Pancreas (tissue), 10 donors: ENCODE measurements at regions of chr16 and their contacts with region 1.

Region 1: GRCh38 chr16:10509534-10510025 is 70.8 kb downstream of the EMP2 start:
- DNase-seq: peak in 4 of 6 donors; percentile 46 to 78 (median 66)
- ATAC-seq: peak; percentile 91 to 97 (median 96)
- H3K4me3 ChIP-seq: no peak overlapping the region
- H3K27ac ChIP-seq: no peak overlapping the region
- H3K4me1 ChIP-seq: peaks cover 0 to 8% (median 6%) of the 10 kb centered on the region in 3 donors
- H3K27me3 ChIP-seq: no peaks in the 10 kb centered on the region
- CTCF ChIP-seq: peak; percentile 55 to 71 (median 64)

Region 2: DNA sequence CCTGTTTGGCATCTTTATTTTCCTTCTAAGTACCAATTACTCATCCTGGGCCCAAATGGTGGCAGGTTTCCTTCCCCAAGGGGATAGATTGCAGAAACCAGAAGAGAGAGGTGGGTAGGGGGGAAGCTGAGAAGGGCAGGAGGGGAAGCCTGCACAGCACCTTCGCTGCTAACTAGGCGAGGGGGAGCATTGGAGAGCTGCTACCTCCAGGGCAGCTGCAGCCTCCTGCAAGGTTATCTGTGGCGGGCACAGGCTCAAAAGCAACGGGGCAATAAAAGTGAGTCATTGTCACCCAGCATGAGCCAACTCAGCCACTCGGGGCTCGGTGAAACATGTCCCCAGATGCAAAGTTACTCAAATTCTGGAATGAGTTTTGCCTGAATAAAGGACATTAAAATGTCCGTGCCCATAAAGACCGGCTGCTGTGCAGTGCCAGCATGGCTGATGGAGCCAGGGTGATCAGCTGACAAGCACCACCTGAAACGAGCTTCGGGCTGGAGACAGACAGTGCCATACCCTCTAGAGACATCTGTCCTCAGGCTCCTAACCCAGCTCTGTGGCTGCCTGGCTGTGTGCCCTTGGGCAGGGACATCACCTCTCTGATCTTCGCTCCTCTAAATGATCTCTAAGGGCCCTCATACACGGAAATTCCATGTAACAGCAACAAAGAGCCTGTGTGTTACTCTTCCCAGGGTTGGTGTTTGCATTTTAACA is 259.3 kb before region 1 on chr16:
- intact Hi-C with region 1: loop called in 2 of 3 experiments (anchors 5 kb)
- DNase-seq: no peak
- ATAC-seq: peak in 2 of 4 donors; percentile 27 to 53
- H3K4me3 ChIP-seq: no peak overlapping the region
- H3K27ac ChIP-seq: no peak overlapping the region
- H3K4me1 ChIP-seq: no peaks in the 10 kb centered on the region
- H3K27me3 ChIP-seq: no peaks in the 10 kb centered on the region
- CTCF ChIP-seq: no peak

Region 3: DNA sequence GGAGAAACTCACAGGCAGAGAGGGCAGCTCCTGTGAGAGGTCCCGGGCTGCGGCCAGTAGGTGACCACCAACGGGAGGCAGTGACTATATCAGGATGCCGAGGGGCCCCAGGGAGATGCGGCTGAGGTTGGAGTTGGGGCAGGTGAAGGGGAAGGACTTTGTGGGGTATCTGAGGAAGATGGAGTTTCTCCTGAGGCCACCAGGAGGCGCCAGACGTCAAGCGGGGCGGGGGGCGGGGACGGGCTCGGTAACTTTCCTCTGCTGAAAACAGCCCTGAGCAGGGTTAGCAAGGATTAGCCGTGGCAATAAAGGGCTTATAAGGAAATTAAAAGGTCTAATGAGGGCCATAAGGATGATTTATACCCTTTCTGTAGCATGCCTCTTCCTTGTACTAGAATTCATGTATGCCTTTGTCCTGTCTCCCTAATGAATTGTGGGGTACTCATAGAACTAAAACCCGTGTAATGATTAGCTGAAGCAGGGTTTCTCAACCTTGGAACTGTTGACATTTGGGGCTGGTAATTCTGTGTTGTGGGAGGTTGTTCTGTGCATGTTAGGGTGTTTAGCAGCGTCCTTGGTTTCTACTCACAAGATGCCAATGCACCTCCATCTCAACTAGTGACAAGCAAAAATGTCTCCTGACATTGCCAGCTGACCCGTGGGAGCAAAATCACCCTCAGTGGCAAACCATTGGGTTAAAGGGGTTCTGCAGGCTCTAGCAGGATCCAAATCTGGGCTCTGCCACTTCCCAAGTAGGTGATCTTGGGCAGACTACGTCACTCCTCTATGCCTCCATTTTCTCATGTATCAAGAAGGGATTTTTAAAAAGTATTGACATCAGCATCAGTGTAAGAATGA is 252.6 kb before region 1 on chr16:
- intact Hi-C with region 1: loop called in 2 of 3 experiments (anchors 5 kb)
- DNase-seq: peak; percentile 3 to 71 (median 37)
- ATAC-seq: peak; percentile 86 to 97 (median 95)
- H3K4me3 ChIP-seq: no peak overlapping the region
- H3K27ac ChIP-seq: no peak overlapping the region
- H3K4me1 ChIP-seq: peaks cover 0 to 7% (median 0%) of the 10 kb centered on the region in 3 donors
- H3K27me3 ChIP-seq: no peaks in the 10 kb centered on the region
- CTCF ChIP-seq: peak; percentile 62 to 70 (median 66)

Region 4: GRCh38 chr16:10314811-10315210 is 194.8 kb before region 1 on chr16:
- intact Hi-C with region 1: loop called in 2 of 3 experiments (anchors 5 to 10 kb)
- DNase-seq: no peak
- ATAC-seq: peak in 2 of 4 donors; percentile 46 to 47
- H3K4me3 ChIP-seq: no peak overlapping the region
- H3K27ac ChIP-seq: no peak overlapping the region
- H3K4me1 ChIP-seq: no peaks in the 10 kb centered on the region
- H3K27me3 ChIP-seq: no peaks in the 10 kb centered on the region
- CTCF ChIP-seq: peak in 1 of 4 donors; percentile 10

Region 5: GRCh38 chr16:10447289-10447688 is 62.3 kb before region 1 on chr16:
- intact Hi-C with region 1: no loop called
- DNase-seq: no peak
- ATAC-seq: no peak
- H3K4me3 ChIP-seq: no peak overlapping the region
- H3K27ac ChIP-seq: no peak overlapping the region
- H3K4me1 ChIP-seq: no peaks in the 10 kb centered on the region
- H3K27me3 ChIP-seq: no peaks in the 10 kb centered on the region
- CTCF ChIP-seq: no peak

Region 6: DNA sequence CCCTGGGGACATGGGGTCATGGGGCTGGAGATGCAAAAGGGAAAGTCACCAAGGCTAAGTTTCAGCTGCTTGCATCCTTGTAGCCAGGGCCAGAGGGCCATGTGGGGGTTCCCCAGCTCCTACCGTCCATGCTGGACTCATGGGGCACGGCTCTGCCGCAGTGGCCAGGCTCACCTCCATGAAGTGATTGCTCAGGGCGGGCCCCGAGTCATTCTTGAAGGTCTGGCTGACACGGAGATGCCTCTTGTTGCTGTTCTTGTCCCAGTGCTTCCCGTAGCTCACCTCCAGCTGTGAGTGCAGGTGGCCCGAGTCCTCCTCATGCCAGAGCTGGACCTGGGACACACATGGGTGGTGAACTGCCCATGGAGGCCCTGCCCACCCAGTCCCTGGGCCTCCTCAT is 950.1 kb after region 1 on chr16:
- intact Hi-C with region 1: no loop called
- DNase-seq: no peak
- ATAC-seq: no peak
- H3K4me3 ChIP-seq: no peak overlapping the region
- H3K27ac ChIP-seq: no peak overlapping the region
- H3K4me1 ChIP-seq: no peaks in the 10 kb centered on the region
- H3K27me3 ChIP-seq: no peaks in the 10 kb centered on the region
- CTCF ChIP-seq: no peak